WTC11 (cell line): ENCODE measurements at regions of chr1 and their contacts with region 1.

Region 1: GRCh38 chr1:89453123-89453972 is 71.3 kb upstream of the LRRC8B start:
- DNase-seq: no peak
- ATAC-seq: no peak
- H3K4me3 Mint-ChIP-seq: no peak overlapping the region
- H3K27ac Mint-ChIP-seq: no peak overlapping the region
- H3K4me1 Mint-ChIP-seq: peaks cover 11% of the 10 kb centered on the region
- H3K27me3 Mint-ChIP-seq: no peaks in the 10 kb centered on the region
- CTCF ChIP-seq: no peak

Region 2: DNA sequence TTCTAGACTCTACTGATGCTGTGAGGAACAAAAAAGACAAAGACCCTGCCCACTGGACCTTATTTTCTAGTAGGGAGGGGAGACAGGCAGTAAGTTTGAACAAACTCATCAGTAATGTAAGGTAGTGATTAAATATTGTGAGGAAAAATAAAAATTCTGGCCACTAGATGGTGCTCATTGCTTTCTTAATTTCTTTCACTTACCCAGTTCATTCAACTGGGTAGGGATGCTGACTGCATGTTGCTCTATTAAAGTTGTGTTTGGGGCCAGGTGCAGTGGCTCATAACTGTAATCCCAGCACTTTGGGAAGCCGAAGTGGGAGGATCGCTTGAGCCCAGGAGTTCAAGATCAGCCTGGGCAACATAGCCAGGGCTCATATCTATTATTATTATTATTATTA is 454.6 kb before region 1 on chr1:
- CTCF ChIA-PET with region 1: interaction called, 10 read pairs
- POLR2A ChIA-PET with region 1: no interaction called
- DNase-seq: no peak
- ATAC-seq: peak; percentile 86
- H3K4me3 Mint-ChIP-seq: no peak overlapping the region
- H3K27ac Mint-ChIP-seq: no peak overlapping the region
- H3K4me1 Mint-ChIP-seq: no peaks in the 10 kb centered on the region
- H3K27me3 Mint-ChIP-seq: no peaks in the 10 kb centered on the region
- CTCF ChIP-seq: peak; percentile 51